ENCODE measurements at regions of chr1 and their contacts with region 1.

Region 1: DNA sequence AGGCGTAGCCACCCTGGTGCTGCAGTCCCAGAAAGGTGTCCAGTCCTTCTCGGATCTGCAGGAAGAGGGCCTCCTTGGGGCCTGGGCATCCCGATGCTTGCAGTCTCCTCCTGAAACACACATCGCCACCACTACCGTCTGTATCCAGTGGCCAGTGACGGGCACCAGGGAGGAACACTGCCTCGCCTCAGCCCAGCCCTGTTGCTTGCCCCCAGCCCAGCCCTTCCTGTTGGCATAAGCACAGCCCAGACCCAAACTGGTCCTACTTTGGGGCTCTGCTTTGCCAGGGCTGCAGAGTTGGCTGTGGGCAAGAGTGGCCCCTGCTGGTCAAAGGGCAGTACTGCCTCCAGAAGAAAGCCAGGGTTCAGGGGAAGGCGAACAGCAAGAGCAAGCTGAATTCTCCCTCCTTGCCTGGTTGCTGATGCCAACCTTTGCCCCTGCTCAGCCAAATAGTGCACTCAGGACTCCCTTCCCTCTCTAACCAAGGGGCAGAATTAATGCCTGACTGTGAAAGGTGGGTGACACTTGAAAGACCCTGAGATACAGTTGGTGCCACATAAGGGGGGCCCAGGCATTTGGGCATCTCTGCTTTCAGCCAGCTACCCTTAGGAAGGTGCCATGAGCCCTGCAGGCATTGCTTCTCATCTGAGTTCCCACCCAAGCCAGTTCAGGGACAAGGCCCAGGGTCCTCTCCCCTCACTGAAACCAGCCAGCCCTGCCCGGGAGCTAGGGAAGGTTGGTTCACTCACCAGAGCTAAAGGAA is 11.1 kb upstream of the ARHGEF2 start:
- DNase-seq: peak; percentile 94
- H3K4me3 ChIP-seq: peak overlapping the region; percentile 12 to 65 (median 30)
- H3K27ac ChIP-seq: peak overlapping the region in 7 of 8 donors; percentile 47 to 87 (median 70)
- H3K4me1 ChIP-seq: peaks cover 9 to 61% (median 28%) of the 10 kb centered on the region in 6 donors
- H3K27me3 ChIP-seq: no peaks in the 10 kb centered on the region
- CTCF ChIP-seq: peak; percentile 97 to 100 (median 99)
- POLR2A ChIP-seq: no peak

Region 2: DNA sequence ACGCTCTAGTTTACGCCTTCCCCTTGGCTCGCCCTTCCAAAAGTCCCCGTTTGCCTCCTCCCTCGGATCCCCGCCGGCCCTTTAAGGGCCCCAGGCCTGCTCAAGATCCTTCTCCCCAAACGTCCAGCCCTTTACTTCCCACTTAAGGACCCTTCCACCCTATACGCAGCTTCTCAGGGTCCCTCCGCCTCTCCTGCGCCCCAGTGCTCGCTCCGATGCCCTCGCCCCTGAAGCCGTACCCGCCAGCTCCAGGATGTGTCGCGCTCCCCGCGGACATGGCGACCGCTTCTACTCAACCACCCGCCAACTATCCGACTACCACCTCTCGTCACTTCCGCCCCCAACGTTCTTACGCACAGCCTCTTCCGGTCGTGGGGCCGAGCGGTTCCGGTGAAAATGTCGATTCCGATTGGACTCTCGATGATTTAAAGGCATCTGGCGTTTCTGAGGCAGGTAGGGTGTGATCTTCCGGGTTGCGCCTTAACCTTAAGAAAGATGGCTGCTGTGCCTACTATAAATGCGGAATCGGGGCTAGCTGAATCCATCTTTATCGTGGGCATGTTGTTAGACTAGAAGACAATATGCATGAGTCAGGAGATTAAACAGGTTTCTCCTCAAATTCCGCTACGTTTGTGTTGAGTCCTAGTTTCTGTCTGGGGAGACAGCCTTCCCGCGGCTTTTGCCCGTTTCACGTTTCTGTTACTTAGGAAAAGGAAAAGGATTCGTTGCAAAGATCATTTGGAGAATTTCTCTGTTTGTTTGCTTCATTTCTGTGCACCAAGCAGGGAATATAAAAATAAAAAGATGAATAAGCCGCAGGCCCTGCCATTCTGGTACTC is 55.1 kb before region 1 on chr1 and contains the start of gene KHDC4:
- intact Hi-C with region 1: loop called (anchors 2 kb)
- DNase-seq: peak; percentile 97
- H3K4me3 ChIP-seq: peak within 1 kb of the TSS; percentile 60 to 93 (median 76)
- H3K27ac ChIP-seq: peak within 1 kb of the TSS; percentile 90 to 95 (median 94)
- H3K4me1 ChIP-seq: peaks cover 45 to 78% (median 65%) of the 10 kb centered on the region in 6 donors
- H3K27me3 ChIP-seq: no peaks in the 10 kb centered on the region
- CTCF ChIP-seq: peak in 10 of 11 experiments; percentile 26 to 62 (median 41)
- POLR2A ChIP-seq: peak; percentile 66 to 93 (median 89)
- total RNA-seq, gene KHDC4: 43.2 to 70.5 (median 59.3) TPM

Region 3: DNA sequence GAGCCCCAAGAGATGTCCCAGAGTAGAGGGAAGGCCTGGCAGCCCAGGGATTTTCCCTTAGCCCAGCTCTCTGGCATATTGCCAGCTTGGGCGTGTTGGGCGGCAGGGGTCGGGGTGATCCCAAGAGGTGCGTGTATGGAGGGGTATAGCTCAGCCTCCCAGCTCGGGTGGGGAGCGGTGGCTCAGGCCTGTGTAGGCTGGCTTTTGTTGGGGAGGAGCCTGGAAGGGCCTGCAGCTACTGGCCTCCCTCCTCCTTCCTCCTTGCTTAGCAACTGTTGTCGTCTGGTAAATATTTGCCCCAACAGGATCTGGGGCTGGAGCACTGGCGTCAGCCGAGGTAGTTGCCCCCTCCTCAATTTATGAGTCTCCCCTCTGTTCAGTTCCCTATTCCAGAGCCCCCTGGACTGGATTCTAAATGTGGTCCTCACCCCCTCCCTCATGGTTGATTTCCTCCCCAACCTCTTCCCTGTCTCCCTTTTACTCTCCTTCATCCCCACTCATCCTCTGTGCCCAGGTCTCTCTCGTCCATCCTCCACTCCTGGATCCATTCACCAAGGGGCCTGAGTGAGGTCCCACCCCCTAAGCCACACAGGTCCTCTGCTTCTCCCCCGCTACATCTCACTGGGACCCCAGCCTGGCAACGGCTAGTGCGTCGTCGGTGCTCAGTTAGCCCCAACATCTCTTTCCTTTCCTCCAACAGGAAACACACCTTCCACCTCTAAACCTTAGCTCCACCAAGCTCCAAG is 114.8 kb after region 1 on chr1:
- intact Hi-C with region 1: no loop called
- DNase-seq: no peak
- H3K4me3 ChIP-seq: no peak overlapping the region
- H3K27ac ChIP-seq: peak overlapping the region in 6 of 8 donors; percentile 23 to 85 (median 84)
- H3K4me1 ChIP-seq: peaks cover 23 to 72% (median 54%) of the 10 kb centered on the region in 6 donors
- H3K27me3 ChIP-seq: peaks cover 0 to 19% (median 0%) of the 10 kb centered on the region in 7 donors
- CTCF ChIP-seq: no peak
- POLR2A ChIP-seq: no peak

Measured in spleen (tissue), 13 donors.